Heart right ventricle (tissue), 16 donors: ENCODE measurements at regions of chr3 and their contacts with region 1.

Region 1: DNA sequence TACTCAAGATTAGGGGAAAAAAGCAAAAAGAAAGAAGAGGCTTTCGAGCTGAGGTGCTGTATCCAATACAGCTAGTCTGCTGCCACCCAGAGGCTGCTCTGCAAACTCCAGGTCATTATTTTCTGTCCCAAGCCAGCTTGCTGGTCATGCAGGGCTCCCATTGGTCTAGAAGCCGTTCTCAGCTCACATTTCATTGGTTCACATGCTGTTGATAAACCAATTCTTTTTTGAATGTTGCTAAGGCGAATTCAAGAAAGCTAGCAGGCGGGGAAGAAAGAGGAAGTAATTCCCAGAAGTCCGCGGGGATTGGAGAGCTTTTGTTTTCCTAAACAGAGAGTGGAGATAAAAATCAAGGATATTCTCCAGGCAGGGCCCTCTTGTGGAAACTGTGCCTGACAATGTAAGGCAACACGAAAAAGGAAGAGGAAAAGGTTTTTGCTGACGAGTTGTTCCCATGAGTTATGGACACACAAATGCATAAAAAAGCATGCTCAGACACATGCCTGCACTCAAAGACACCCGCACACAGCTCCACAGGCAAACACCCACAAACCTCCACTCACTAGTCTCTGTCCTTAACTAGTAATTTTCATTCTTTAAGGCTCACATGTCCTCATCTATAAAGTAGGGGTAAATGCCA is 33.4 kb downstream of the FSTL1 start:
- DNase-seq: peak; percentile 84 to 96
- ATAC-seq: peak; percentile 31 to 87 (median 79)
- H3K4me3 ChIP-seq: peak overlapping the region in 6 of 10 donors; percentile 27 to 38 (median 35)
- H3K27ac ChIP-seq: peak overlapping the region; percentile 42 to 89 (median 84)
- H3K4me1 ChIP-seq: peaks cover 18 to 75% (median 68%) of the 10 kb centered on the region in 9 donors
- H3K27me3 ChIP-seq: no peaks in the 10 kb centered on the region
- CTCF ChIP-seq: peak; percentile 75 to 95 (median 89)

Region 2: GRCh38 chr3:119891944-119892721 is 525.3 kb before region 1 on chr3:
- intact Hi-C with region 1: loop called in 3 of 10 experiments (anchors 5 to 10 kb)
- DNase-seq: peak in 1 of 2 donors; percentile 60
- ATAC-seq: peak; percentile 61 to 89 (median 84)
- H3K4me3 ChIP-seq: peak overlapping the region in 1 of 10 donors; percentile 6
- H3K27ac ChIP-seq: peak overlapping the region in 1 of 10 donors; percentile 11
- H3K4me1 ChIP-seq: peaks cover 0 to 12% (median 9%) of the 10 kb centered on the region in 9 donors
- H3K27me3 ChIP-seq: no peaks in the 10 kb centered on the region
- CTCF ChIP-seq: peak; percentile 45 to 89 (median 75)

Region 3: DNA sequence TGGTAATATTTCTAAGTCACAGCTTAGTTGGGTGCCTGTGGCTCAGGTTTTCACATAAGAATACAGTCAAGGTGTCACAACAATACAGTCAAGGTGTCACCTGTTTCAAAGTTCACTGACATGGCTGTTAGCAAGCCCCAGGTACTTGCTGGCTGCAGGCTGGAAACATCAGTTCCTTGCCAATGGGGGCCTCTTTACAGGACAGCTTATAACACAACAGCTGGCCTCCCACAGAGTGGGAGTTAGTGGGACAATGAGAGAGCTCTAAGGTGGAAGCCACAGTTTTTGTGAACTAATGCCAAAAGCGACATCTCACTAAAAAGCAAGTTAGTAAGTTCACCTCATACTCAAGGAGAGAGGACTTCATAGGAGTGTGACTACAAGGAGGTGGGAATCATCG is 177.7 kb before region 1 on chr3:
- intact Hi-C with region 1: loop called in 9 of 10 experiments (anchors 1 to 10 kb)
- DNase-seq: no peak
- ATAC-seq: no peak
- H3K4me3 ChIP-seq: no peak overlapping the region
- H3K27ac ChIP-seq: no peak overlapping the region
- H3K4me1 ChIP-seq: no peaks in the 10 kb centered on the region
- H3K27me3 ChIP-seq: peaks cover 0 to 10% (median 0%) of the 10 kb centered on the region in 7 donors
- CTCF ChIP-seq: no peak

Region 4: DNA sequence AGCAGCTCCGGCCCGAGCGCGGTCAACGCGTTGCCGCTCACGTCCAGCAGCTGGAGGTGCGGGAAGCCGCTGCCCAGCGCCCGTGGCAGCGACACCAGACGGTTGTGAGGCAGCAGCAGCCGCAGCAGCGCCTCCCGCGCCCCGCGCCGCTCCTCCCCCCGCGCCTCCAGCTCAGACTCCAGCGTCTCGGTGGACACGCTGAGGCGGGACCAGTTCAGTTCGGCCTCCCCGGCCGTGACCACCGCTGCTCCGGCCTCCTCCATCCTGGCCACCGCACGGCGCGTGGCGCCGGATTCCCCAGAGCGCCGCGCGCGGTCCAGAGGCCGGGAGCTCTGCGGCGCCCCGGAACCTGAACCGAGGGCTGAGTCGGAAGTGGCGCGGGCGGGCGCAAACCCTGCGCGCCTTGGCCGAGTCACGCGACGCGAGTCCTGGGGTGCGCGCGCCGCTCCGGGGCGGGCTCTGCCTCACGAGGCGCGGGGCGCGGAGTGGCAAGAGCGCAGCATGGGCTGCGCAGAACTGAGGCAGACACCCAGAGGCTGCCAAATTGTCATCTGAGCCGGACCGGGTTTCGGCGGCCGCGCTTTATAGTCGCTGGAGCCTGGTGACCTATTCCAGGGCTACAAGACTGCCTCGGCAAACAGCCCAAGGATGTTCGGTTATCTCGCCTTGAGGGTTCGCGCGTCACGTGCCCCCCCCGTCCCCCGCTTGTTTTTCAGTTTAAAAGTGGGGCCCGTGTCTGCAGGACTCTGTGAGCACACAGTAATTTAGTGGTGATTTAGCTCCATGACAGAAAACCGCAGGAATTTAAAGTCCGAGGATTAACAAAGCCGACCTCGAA is 68.2 kb before region 1 on chr3 and contains the start of gene LRRC58:
- intact Hi-C with region 1: loop called in 4 of 10 experiments (anchors 5 to 10 kb)
- DNase-seq: peak; percentile 85 to 92
- ATAC-seq: peak; percentile 97 to 99 (median 98)
- H3K4me3 ChIP-seq: peak within 1 kb of the TSS; percentile 54 to 98 (median 89)
- H3K27ac ChIP-seq: peak within 1 kb of the TSS; percentile 53 to 94 (median 89)
- H3K4me1 ChIP-seq: peaks cover 0 to 55% (median 13%) of the 10 kb centered on the region in 9 donors
- H3K27me3 ChIP-seq: no peaks in the 10 kb centered on the region
- CTCF ChIP-seq: peak in 6 of 9 donors; percentile 14 to 61 (median 42)
- total RNA-seq, gene LRRC58: 6.9 to 12.1 (median 9.1) TPM

Region 5: GRCh38 chr3:120369000-120369399 is 48.4 kb before region 1 on chr3:
- intact Hi-C with region 1: no loop called
- DNase-seq: no peak
- ATAC-seq: no peak
- H3K4me3 ChIP-seq: no peak overlapping the region
- H3K27ac ChIP-seq: no peak overlapping the region
- H3K4me1 ChIP-seq: no peaks in the 10 kb centered on the region
- H3K27me3 ChIP-seq: peaks cover 0 to 3% (median 0%) of the 10 kb centered on the region in 7 donors
- CTCF ChIP-seq: no peak

Region 6: DNA sequence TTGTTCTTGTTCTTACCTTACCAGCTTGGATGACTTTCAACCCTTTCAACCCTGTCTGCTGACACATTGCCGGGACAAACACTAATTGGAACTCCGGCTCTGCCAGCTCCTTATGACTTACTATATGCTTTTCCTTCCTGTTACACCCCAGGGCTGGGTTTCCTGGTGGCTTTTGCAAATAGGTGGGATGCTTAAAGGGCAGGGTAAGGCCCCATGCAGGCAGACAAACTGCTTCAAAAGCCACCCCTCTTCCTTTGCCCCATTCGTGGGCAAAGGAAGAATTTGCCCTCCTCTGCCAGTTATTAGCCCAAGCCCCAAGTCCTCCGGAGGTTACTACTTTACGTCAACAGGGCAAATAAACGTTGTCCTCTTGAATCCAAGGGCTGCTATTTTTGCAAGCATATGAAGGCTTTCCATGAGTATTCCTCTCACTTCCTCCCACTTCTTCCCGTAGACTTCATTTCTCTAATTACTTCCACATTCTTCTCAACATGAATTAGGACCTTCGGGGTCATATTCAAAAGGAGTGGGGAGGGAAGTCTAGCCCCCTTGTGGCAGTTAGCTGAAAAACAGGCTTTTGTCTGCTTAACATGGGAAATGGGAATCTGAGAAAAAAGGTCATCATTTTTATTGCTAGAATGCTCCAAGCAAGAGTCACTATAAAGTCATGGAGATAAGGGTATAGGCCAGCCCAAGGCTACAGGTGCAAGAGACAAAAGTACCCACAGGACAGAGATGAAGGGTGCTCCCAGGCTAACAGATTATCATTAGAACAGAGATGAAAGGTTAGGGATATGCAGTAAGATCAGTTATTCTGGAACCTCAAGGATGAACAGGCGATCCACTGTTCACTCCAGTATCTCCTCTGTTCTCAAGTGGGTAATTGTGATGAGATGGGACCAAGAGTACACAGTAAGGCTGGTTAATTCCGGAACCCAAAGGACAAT is 89.7 kb after region 1 on chr3:
- intact Hi-C with region 1: loop called in 8 of 10 experiments (anchors 2 to 10 kb)
- DNase-seq: peak in 1 of 2 donors; percentile 48
- ATAC-seq: peak; percentile 51 to 85 (median 76)
- H3K4me3 ChIP-seq: no peak overlapping the region
- H3K27ac ChIP-seq: peak overlapping the region in 6 of 10 donors; percentile 6 to 40 (median 23)
- H3K4me1 ChIP-seq: peaks cover 5 to 22% (median 16%) of the 10 kb centered on the region in 9 donors
- H3K27me3 ChIP-seq: no peaks in the 10 kb centered on the region
- CTCF ChIP-seq: peak; percentile 46 to 80 (median 70)

Region 7: DNA sequence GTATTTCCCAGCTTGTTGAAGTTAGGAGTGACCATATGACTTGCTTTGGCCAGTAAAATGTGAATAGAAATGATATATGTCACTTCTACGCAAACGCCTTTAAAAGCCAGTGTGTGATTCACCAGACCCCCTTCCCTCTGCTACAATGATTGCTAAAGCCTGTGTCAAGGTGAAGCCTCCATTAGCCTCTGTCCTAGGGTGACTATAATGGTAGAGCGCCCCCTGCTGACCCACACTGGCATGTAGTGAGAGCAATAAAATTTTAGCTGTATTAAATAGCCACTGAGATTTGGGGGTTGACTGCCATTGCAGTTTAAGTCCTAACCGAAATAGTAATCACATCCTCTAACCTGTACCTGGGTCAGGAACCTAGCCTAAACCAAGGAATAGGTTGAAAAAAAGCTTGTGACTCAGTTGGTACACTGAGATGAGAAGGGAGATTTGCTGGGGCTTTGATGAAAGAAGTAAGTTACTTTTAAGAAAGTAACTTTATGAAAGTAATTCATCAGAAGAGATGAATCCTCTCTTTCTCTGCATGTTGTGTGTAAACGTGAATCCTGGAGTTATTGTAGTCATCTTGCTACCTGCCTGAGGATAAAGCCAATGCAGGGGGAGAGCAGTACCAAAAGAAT is 377.7 kb after region 1 on chr3:
- intact Hi-C with region 1: loop called in 3 of 10 experiments (anchors 5 to 10 kb)
- DNase-seq: peak; percentile 74 to 77
- ATAC-seq: peak; percentile 79 to 94 (median 88)
- H3K4me3 ChIP-seq: no peak overlapping the region
- H3K27ac ChIP-seq: no peak overlapping the region
- H3K4me1 ChIP-seq: no peaks in the 10 kb centered on the region
- H3K27me3 ChIP-seq: no peaks in the 10 kb centered on the region
- CTCF ChIP-seq: peak; percentile 63 to 86 (median 81)